ENCODE measurements at regions of chr2 and their contacts with region 1.

Region 1: DNA sequence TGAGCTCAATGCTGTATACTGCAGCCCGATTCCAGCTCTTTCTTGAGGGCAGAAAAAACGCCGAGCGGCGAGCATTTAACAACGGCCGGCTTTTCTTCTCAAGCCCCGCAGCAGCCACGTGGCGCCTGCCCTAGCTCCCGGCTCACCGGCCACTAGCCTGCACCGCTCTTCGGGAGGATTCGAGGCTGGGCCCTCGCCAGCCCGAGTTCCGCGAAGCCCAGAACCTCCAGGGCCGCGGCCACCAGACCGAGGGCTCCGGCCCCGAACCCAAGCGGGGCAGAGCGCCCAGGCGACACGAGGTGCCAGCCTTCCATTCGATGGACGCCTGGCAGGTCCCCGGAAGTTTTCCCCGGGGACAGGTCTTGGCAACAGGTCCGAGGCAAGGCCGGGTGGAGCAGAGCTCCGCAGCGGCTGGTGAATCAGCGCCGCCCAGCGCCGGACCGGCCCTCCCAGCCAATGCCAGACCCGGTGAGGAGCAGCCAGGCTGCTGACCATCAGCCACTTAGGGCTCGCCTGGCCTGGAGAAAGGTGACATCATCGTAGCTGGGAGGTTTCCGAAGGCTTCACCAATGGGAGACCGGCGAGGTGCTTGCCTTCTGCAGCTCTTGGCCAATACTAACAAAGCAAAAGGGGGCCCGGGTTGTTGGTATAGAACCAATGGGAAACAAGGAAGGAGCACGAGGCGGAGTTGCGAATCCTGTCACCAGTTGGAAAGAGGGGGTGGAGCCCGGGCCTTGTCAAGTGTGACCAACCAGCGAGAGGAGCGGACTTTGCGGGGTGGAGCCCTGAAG is 544 bp upstream of the MXD1 start:
- DNase-seq: peak in 28 of 35 experiments; percentile 12 to 100 (median 100)
- ATAC-seq: peak; percentile 90 to 95 (median 92)
- H3K4me3 ChIP-seq: peak overlapping the region; percentile 92 to 94
- H3K4me3 Mint-ChIP-seq: peak overlapping the region; percentile 80 to 86 (median 81)
- H3K27ac ChIP-seq: peak overlapping the region; percentile 98
- H3K27ac Mint-ChIP-seq: peak overlapping the region; percentile 78
- H3K4me1 ChIP-seq: peaks cover 12 to 15% of the 10 kb centered on the region in 2 experiments
- H3K4me1 Mint-ChIP-seq: peaks cover 30 to 36% (median 36%) of the 10 kb centered on the region in 3 donors
- H3K27me3 ChIP-seq: no peaks in the 10 kb centered on the region
- H3K27me3 Mint-ChIP-seq: no peaks in the 10 kb centered on the region

Region 2: GRCh38 chr2:69645031-69645431 is 269.3 kb before region 1 on chr2:
- CTCF ChIA-PET with region 1: no interaction called
- POLR2A ChIA-PET with region 1: no interaction called
- DNase-seq: peak in 33 of 35 experiments; percentile 8 to 80 (median 43)
- ATAC-seq: peak; percentile 38 to 59 (median 50)
- H3K4me3 ChIP-seq: peak overlapping the region; percentile 77 to 98
- H3K4me3 Mint-ChIP-seq: peak overlapping the region; percentile 91 to 96 (median 96)
- H3K27ac ChIP-seq: peak overlapping the region; percentile 83
- H3K27ac Mint-ChIP-seq: peak overlapping the region; percentile 93 to 97
- H3K4me1 ChIP-seq: peaks cover 46 to 57% of the 10 kb centered on the region in 2 experiments
- H3K4me1 Mint-ChIP-seq: peaks cover 52 to 60% (median 60%) of the 10 kb centered on the region in 3 donors
- H3K27me3 ChIP-seq: no peaks in the 10 kb centered on the region
- H3K27me3 Mint-ChIP-seq: no peaks in the 10 kb centered on the region

Region 3: GRCh38 chr2:69893684-69894551 is 20.4 kb before region 1 on chr2 and contains the start of gene SNRNP27:
- CTCF ChIA-PET with region 1: interaction called in 1 of 2 experiments, 4 read pairs
- POLR2A ChIA-PET with region 1: interaction called in 1 of 2 experiments, 11 read pairs
- DNase-seq: peak; percentile 65 to 87 (median 79)
- ATAC-seq: peak; percentile 93 to 96 (median 94)
- H3K4me3 ChIP-seq: peak within 1 kb of the TSS; percentile 73 to 93
- H3K4me3 Mint-ChIP-seq: peak within 1 kb of the TSS; percentile 86 to 100 (median 99)
- H3K27ac ChIP-seq: peak within 1 kb of the TSS; percentile 65
- H3K27ac Mint-ChIP-seq: peak within 1 kb of the TSS; percentile 97 to 99
- H3K4me1 ChIP-seq: peaks cover 13 to 19% of the 10 kb centered on the region in 2 experiments
- H3K4me1 Mint-ChIP-seq: peaks cover 45 to 50% (median 46%) of the 10 kb centered on the region in 3 donors
- H3K27me3 ChIP-seq: no peaks in the 10 kb centered on the region
- H3K27me3 Mint-ChIP-seq: no peaks in the 10 kb centered on the region
- total RNA-seq, gene SNRNP27: 38.3 to 51.1 (median 42.0) TPM

Region 4: GRCh38 chr2:69955029-69955428 is 40.7 kb after region 1 on chr2:
- CTCF ChIA-PET with region 1: no interaction called
- POLR2A ChIA-PET with region 1: no interaction called
- DNase-seq: no peak
- ATAC-seq: no peak
- H3K4me3 ChIP-seq: no peak overlapping the region
- H3K4me3 Mint-ChIP-seq: no peak overlapping the region
- H3K27ac ChIP-seq: no peak overlapping the region
- H3K27ac Mint-ChIP-seq: no peak overlapping the region
- H3K4me1 ChIP-seq: peaks cover 0 to 5% of the 10 kb centered on the region in 2 experiments
- H3K4me1 Mint-ChIP-seq: peaks cover 0 to 5% (median 0%) of the 10 kb centered on the region in 3 donors
- H3K27me3 ChIP-seq: peaks cover 0 to 15% of the 10 kb centered on the region in 2 experiments
- H3K27me3 Mint-ChIP-seq: peaks cover 2 to 4% of the 10 kb centered on the region in 2 donors

Region 5: DNA sequence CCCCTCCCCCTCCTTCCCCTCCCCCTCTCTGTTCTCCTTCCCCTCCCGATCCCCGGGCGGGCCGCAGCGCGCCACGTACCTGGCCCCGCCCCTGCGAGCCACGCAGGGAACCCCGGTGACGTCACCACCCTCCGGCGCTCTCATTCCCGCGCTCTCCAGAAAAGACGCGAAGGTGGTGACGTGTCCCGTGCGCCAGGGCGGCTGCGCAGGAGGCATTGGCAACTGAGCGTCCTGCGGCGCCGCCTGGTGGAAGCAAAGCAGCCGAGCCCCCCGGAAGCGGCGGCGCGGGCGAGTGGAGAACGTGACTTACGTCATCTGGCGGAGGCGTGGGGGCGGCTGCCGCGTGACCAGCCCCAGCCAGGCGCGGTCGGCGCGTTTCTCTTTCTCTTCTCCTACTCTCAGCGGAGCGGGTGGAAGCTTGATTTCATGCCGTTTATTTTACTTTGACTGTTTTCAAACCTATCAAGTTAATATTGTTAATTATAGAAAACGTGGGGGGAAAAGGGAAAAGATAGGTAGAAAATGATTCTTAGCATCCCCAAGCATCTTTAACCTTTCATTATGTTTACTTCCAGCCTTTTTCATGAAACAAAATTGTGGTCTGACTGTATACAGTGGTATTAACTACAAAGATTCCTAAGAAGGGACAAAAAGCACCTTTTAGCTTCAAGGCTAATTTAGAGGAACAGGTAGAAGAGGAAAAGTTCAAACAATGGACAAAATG is 228.4 kb after region 1 on chr2:
- CTCF ChIA-PET with region 1: interaction called, 3 to 35 read pairs
- POLR2A ChIA-PET with region 1: interaction called, 8 to 26 read pairs
- DNase-seq: peak; percentile 98 to 100 (median 99)
- ATAC-seq: peak; percentile 79 to 83 (median 82)
- H3K4me3 ChIP-seq: peak overlapping the region; percentile 3 to 54
- H3K4me3 Mint-ChIP-seq: peak overlapping the region; percentile 82 to 88 (median 87)
- H3K27ac ChIP-seq: peak overlapping the region; percentile 97
- H3K27ac Mint-ChIP-seq: peak overlapping the region; percentile 97
- H3K4me1 ChIP-seq: peaks cover 31 to 52% of the 10 kb centered on the region in 2 experiments
- H3K4me1 Mint-ChIP-seq: peaks cover 55 to 73% (median 59%) of the 10 kb centered on the region in 3 donors
- H3K27me3 ChIP-seq: no peaks in the 10 kb centered on the region
- H3K27me3 Mint-ChIP-seq: no peaks in the 10 kb centered on the region

Region 6: GRCh38 chr2:70190418-70191243 is 276.3 kb after region 1 on chr2 and contains the start of gene C2orf42:
- CTCF ChIA-PET with region 1: interaction called, 5 to 21 read pairs
- POLR2A ChIA-PET with region 1: interaction called, 3 to 29 read pairs
- DNase-seq: peak; percentile 88 to 97 (median 94)
- ATAC-seq: peak; percentile 85 to 91 (median 88)
- H3K4me3 ChIP-seq: peak within 1 kb of the TSS; percentile 73
- H3K4me3 Mint-ChIP-seq: peak within 1 kb of the TSS; percentile 88 to 97 (median 91)
- H3K27ac ChIP-seq: peak within 1 kb of the TSS; percentile 95
- H3K27ac Mint-ChIP-seq: peak within 1 kb of the TSS; percentile 98 to 99
- H3K4me1 ChIP-seq: peaks cover 7 to 8% of the 10 kb centered on the region in 2 experiments
- H3K4me1 Mint-ChIP-seq: peaks cover 17 to 24% (median 22%) of the 10 kb centered on the region in 3 donors
- H3K27me3 ChIP-seq: no peaks in the 10 kb centered on the region
- H3K27me3 Mint-ChIP-seq: no peaks in the 10 kb centered on the region
- total RNA-seq, gene C2orf42: 23.3 to 45.9 (median 39.1) TPM

Region 7: GRCh38 chr2:70301344-70302194 is 387.2 kb after region 1 on chr2 and contains the start of gene FAM136A:
- CTCF ChIA-PET with region 1: interaction called, 4 to 18 read pairs
- POLR2A ChIA-PET with region 1: interaction called in 1 of 2 experiments, 4 read pairs
- DNase-seq: peak; percentile 71 to 93 (median 85)
- ATAC-seq: peak; percentile 91 to 97 (median 92)
- H3K4me3 ChIP-seq: peak within 1 kb of the TSS; percentile 79 to 88
- H3K4me3 Mint-ChIP-seq: peak within 1 kb of the TSS; percentile 85 to 93 (median 88)
- H3K27ac ChIP-seq: peak within 1 kb of the TSS; percentile 75
- H3K27ac Mint-ChIP-seq: peak within 1 kb of the TSS; percentile 91 to 93
- H3K4me1 ChIP-seq: peaks cover 5 to 24% of the 10 kb centered on the region in 2 experiments
- H3K4me1 Mint-ChIP-seq: peaks cover 29 to 35% (median 31%) of the 10 kb centered on the region in 3 donors
- H3K27me3 ChIP-seq: no peaks in the 10 kb centered on the region
- H3K27me3 Mint-ChIP-seq: no peaks in the 10 kb centered on the region
- total RNA-seq, gene FAM136A: 24.4 to 34.7 (median 29.7) TPM